ENCODE measurements at regions of chr18 and their contacts with region 1.

Region 1: GRCh38 chr18:63936156-63936931 is 12.8 kb upstream of the HMSD start:
- DNase-seq: peak; percentile 59
- H3K4me3 Mint-ChIP-seq: peak overlapping the region; percentile 73
- H3K27ac Mint-ChIP-seq: no peak overlapping the region
- H3K4me1 Mint-ChIP-seq: peaks cover 3% of the 10 kb centered on the region
- H3K27me3 Mint-ChIP-seq: peaks cover 16% of the 10 kb centered on the region

Region 2: DNA sequence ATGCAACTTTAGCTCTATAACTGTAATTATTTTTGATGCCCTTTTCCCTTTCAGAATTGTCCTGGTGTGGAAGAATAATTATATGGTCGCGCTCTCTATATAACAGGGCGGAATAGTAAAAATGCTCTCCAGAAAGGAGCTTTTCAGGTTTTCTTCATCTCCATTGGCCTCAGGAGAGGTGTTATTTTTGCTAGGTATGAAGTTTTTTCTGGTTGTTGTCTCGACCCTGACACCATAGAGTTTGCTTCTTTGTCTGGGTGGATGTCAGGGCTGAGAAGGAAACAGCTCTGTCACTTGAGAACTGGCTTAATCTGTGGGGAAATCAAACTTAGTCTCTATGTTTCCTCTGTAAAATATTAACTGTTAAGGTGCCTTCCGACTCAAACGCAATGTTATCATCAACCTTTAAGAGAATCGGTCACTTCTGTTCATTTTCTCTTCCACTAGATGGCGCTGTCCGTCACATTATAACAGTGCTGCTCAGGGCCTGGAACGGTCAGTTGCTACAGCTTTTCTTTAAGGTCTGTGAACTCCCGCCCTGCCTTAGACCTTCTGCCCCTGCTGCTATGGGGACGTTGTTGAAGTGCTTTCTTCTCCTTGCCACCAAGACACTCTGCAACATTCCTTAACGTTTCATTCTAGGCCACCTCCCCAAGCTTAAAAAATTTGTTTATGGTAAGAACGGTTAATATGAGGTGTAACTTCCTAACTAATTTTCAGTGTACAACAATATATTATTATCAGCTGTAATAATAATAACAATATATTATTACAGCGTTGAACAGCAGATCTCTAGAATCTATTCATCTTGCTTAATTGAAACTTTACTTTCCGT is 417.9 kb before region 1 on chr18:
- intact Hi-C with region 1: loop called (anchors 5 kb)
- DNase-seq: peak; percentile 30
- H3K4me3 Mint-ChIP-seq: no peak overlapping the region
- H3K27ac Mint-ChIP-seq: no peak overlapping the region
- H3K4me1 Mint-ChIP-seq: no peaks in the 10 kb centered on the region
- H3K27me3 Mint-ChIP-seq: peaks cover 24% of the 10 kb centered on the region

Region 3: GRCh38 chr18:63788447-63789096 is 147.8 kb before region 1 on chr18:
- intact Hi-C with region 1: no loop called
- DNase-seq: no peak
- H3K4me3 Mint-ChIP-seq: no peak overlapping the region
- H3K27ac Mint-ChIP-seq: no peak overlapping the region
- H3K4me1 Mint-ChIP-seq: peaks cover 4% of the 10 kb centered on the region
- H3K27me3 Mint-ChIP-seq: no peaks in the 10 kb centered on the region

Region 4: DNA sequence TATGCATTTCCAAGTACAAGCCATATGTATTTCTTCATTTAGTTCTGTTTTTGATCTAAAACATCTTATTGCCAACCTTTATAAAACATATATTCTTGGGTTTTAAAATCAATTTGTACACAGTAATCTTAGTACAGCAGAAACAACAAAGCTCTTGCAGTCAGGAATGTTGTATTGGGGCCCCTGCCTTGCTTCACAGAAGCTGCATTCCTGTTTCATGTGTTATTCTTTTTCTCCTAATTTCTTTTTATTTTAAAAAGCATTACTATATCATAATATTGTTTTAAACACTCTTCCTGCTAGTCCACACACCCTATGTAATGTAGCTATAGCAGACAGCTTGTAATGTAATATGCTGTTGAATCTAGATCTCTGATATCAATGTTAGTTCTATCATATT is 137.2 kb before region 1 on chr18:
- intact Hi-C with region 1: no loop called
- DNase-seq: no peak
- H3K4me3 Mint-ChIP-seq: no peak overlapping the region
- H3K27ac Mint-ChIP-seq: no peak overlapping the region
- H3K4me1 Mint-ChIP-seq: no peaks in the 10 kb centered on the region
- H3K27me3 Mint-ChIP-seq: no peaks in the 10 kb centered on the region

Region 5: GRCh38 chr18:63823518-63824219 is 112.7 kb before region 1 on chr18:
- intact Hi-C with region 1: loop called (anchors 2 kb)
- DNase-seq: no peak
- H3K4me3 Mint-ChIP-seq: no peak overlapping the region
- H3K27ac Mint-ChIP-seq: no peak overlapping the region
- H3K4me1 Mint-ChIP-seq: peaks cover under 1% of the 10 kb centered on the region
- H3K27me3 Mint-ChIP-seq: peaks cover 12% of the 10 kb centered on the region

Region 6: GRCh38 chr18:63890950-63891304 is 45.4 kb before region 1 on chr18:
- intact Hi-C with region 1: loop called (anchors 5 kb)
- DNase-seq: no peak
- H3K4me3 Mint-ChIP-seq: no peak overlapping the region
- H3K27ac Mint-ChIP-seq: no peak overlapping the region
- H3K4me1 Mint-ChIP-seq: peaks cover 4% of the 10 kb centered on the region
- H3K27me3 Mint-ChIP-seq: peaks cover 12% of the 10 kb centered on the region

Region 7: DNA sequence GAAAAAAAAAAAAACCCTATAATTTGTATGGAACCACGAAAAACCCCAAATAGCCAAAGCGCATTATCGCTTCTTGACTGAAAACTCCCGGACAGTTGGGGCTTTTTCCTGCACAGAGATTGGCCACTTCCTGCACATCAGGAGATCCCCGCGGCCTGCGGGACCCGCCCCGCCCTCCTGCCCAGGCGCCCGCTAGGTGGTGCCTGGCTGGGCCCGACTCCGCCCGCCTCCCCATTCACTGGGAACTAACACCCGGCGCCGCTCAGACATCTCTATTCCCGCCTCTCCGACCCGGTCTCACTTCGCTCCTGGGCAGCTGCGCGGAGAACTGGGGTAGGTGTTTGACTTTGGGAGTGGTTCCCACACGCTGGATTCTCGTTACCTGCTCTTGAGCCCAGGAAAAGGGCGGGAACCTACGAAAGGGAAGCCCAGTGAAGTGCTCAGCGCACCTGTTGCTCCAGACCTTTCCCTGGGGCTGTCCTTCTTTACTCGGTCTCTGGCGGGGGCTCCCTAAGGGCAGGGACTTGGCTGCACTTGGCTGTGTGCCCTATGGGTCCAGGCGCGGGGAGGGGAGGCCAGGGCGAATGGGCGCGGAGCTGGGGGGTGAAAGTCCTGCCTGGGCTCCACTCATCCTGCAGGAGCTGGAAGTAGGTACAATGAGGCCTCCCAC is 12.9 kb after region 1 on chr18 and contains the start of gene HMSD:
- intact Hi-C with region 1: loop called (anchors 1 kb)
- DNase-seq: peak; percentile 52
- H3K4me3 Mint-ChIP-seq: peak within 1 kb of the TSS; percentile 77
- H3K27ac Mint-ChIP-seq: peak within 1 kb of the TSS; percentile 67
- H3K4me1 Mint-ChIP-seq: peaks cover 38% of the 10 kb centered on the region
- H3K27me3 Mint-ChIP-seq: peaks cover 2% of the 10 kb centered on the region
- total RNA-seq, gene HMSD: 9.1 and 14.9 TPM in 2 replicates

Region 8: GRCh38 chr18:63969960-63970802 is 33.8 kb after region 1 on chr18 and contains the start of gene SERPINB8:
- intact Hi-C with region 1: loop called (anchors 5 kb)
- DNase-seq: peak; percentile 71
- H3K4me3 Mint-ChIP-seq: peak within 1 kb of the TSS; percentile 90
- H3K27ac Mint-ChIP-seq: peak within 1 kb of the TSS; percentile 91
- H3K4me1 Mint-ChIP-seq: peaks cover 31% of the 10 kb centered on the region
- H3K27me3 Mint-ChIP-seq: no peaks in the 10 kb centered on the region
- total RNA-seq, gene SERPINB8: 19.0 and 21.0 TPM in 2 replicates

Region 9: GRCh38 chr18:64134044-64134747 is 197.9 kb after region 1 on chr18:
- intact Hi-C with region 1: no loop called
- DNase-seq: no peak
- H3K4me3 Mint-ChIP-seq: no peak overlapping the region
- H3K27ac Mint-ChIP-seq: no peak overlapping the region
- H3K4me1 Mint-ChIP-seq: no peaks in the 10 kb centered on the region
- H3K27me3 Mint-ChIP-seq: no peaks in the 10 kb centered on the region

Region 10: GRCh38 chr18:64175432-64175831 is 239.1 kb after region 1 on chr18:
- intact Hi-C with region 1: no loop called
- DNase-seq: no peak
- H3K4me3 Mint-ChIP-seq: no peak overlapping the region
- H3K27ac Mint-ChIP-seq: no peak overlapping the region
- H3K4me1 Mint-ChIP-seq: no peaks in the 10 kb centered on the region
- H3K27me3 Mint-ChIP-seq: no peaks in the 10 kb centered on the region